Cardiac septum (tissue), 1 donor: ENCODE measurements at regions of chr9 and their contacts with region 1.

Region 1: DNA sequence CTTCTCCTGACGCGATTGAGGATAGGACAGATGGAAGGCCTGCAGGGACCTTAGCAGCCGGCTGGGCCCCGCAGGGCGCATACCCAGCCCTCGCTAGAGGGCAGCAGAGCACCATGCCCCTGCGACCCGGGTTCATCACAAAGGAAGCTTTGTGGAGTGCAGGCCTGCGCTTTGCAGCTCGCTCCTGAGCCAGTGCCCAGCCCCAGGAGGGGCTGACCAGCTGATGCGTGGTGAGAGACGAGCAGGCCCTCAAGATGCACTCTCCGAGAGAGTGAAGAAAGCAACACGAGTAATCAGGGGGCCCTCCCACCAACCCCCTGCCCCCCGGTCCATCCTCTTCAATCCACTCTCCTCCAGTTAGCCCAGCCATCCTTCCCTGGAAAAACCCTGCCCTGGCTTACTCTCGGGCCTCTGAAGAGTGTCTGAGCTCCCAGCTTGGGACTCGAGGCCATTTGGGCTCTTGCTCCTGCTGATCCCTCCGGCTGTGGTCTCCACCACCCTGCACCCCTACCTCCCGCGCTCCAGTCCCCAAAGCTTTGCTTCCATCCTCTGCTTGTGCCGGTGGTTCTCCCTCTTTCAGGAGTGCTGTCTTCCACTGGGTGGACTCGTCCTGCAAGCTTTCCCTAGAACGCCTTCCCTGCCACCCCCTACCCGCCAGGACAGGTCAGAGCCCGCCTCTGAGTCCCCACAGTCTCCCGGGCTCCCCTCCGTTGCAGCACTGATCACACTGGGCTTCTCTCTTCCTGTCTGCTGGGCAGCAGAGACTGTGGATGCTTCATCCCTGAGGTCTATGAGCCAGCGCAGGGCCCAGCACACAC is 9.1 kb upstream of the KIF12 start:
- DNase-seq: peak; percentile 85

Region 2: GRCh38 chr9:114033397-114034103 is 74.7 kb before region 1 on chr9:
- intact Hi-C with region 1: no loop called
- DNase-seq: peak; percentile 75

Region 3: DNA sequence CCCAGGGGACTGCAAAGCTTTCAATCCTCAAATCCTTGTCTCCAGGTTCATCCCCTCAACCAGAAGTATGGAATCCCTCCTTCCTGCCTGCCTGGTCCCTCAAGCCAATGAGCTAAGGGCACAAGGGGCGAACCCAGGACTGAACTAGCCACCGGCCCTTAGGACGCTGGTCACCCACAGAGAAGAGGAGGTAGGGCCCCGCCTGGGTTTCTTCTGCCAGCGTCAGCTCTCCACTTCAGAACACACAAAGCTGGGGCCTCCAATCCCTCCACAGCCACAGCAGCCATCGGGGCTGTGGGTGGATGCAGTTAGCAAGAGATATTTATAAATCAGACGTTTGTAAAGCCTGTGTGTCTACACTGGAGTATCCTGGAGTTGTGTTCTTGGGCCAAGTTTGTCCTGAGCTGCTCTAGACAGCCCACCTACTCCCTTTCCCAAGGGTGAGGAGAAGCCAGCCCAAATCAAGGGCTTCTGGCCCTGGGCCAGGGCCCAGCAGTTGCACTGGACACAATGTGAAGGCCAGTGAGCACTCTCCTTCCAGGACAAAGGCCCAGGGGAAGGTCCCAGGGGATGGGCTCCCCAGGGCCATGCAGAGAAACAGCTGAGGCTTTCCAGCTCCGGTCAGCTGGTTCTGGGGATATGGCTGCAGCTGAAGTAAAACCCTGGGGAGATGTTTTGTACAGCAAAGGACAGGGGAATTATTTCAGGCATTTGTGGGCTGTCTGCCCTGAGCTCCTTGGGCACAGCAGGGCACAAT is 49.0 kb before region 1 on chr9:
- intact Hi-C with region 1: loop called (anchors 10 kb)
- DNase-seq: peak; percentile 73

Region 4: GRCh38 chr9:114131808-114132549 is 23.8 kb after region 1 on chr9:
- intact Hi-C with region 1: no loop called
- DNase-seq: no peak

Region 5: DNA sequence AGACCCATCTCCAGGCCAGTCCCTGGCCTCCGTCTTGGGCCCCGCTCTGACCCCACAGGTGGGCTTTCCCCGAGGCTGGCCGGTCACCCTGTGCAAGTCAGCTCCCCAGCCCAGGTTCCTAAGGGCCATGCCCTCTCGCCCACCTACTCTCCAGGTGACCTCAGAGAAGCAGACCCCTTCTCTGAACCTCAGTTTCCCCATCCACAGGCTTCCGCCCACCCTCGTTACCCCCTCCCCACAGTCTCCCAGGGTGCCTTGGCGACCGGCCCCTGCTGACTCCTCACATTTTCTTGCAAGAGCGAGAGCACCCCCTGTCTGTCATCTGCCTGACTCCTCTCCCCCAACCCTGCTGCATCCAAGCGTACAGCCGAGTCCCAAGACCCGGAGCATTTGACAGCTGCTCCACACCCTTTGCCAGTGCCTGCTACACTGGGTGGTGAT is 163.4 kb after region 1 on chr9:
- intact Hi-C with region 1: loop called (anchors 5 kb)
- DNase-seq: no peak

Region 6: GRCh38 chr9:114291064-114291474 is 182.8 kb after region 1 on chr9:
- intact Hi-C with region 1: loop called (anchors 2 kb)
- DNase-seq: peak; percentile 81